HCT116 (cell line): ENCODE measurements at regions of chr10 and their contacts with region 1.

Region 1: GRCh38 chr10:7872041-7872442 is 53.7 kb downstream of the TAF3 start:
- DNase-seq: peak; percentile 0
- ATAC-seq: no peak
- H3K4me3 ChIP-seq: no peak overlapping the region; a peak in 1 of 4 replicates
- H3K27ac ChIP-seq: no peak overlapping the region
- H3K4me1 ChIP-seq: no peaks in the 10 kb centered on the region
- H3K27me3 ChIP-seq: no peaks in the 10 kb centered on the region
- CTCF ChIP-seq: peak; percentile 51 to 80 (median 57); a peak in 5 of 6 replicates
- POLR2A ChIP-seq: no peak
- RAD21 ChIP-seq: peak; percentile 70

Region 2: GRCh38 chr10:8306685-8307364 is 434.8 kb after region 1 on chr10:
- CTCF ChIA-PET with region 1: no interaction called
- POLR2A ChIA-PET with region 1: no interaction called
- RAD21 ChIA-PET with region 1: no interaction called
- intact Hi-C with region 1: loop called (anchors 10 kb)
- DNase-seq: no peak
- ATAC-seq: no peak
- H3K4me3 ChIP-seq: no peak overlapping the region
- H3K27ac ChIP-seq: no peak overlapping the region
- H3K4me1 ChIP-seq: no peaks in the 10 kb centered on the region
- H3K27me3 ChIP-seq: peaks cover 9% of the 10 kb centered on the region; the same call in 1 of the 2 replicates
- CTCF ChIP-seq: no peak
- POLR2A ChIP-seq: no peak
- RAD21 ChIP-seq: no peak

Region 3: GRCh38 chr10:9209105-9209798 is 1337.2 kb after region 1 on chr10:
- CTCF ChIA-PET with region 1: interaction called, 15 read pairs
- POLR2A ChIA-PET with region 1: no interaction called
- RAD21 ChIA-PET with region 1: no interaction called
- intact Hi-C with region 1: loop called (anchors 1 kb)
- DNase-seq: peak; percentile 33
- ATAC-seq: peak; percentile 47
- H3K4me3 ChIP-seq: no peak overlapping the region
- H3K27ac ChIP-seq: no peak overlapping the region
- H3K4me1 ChIP-seq: no peaks in the 10 kb centered on the region
- H3K27me3 ChIP-seq: no peaks in the 10 kb centered on the region
- CTCF ChIP-seq: peak; percentile 32 to 80 (median 75); a peak in 5 of 6 replicates
- POLR2A ChIP-seq: no peak
- RAD21 ChIP-seq: peak; percentile 61

Region 4: GRCh38 chr10:9302120-9302746 is 1430.2 kb after region 1 on chr10:
- CTCF ChIA-PET with region 1: interaction called, 4 read pairs
- POLR2A ChIA-PET with region 1: no interaction called
- RAD21 ChIA-PET with region 1: no interaction called
- intact Hi-C with region 1: loop called (anchors 1 kb)
- DNase-seq: peak; percentile 23
- ATAC-seq: 0 out of 2 replicates have a peak, but pooled peaks have one; percentile 40
- H3K4me3 ChIP-seq: no peak overlapping the region
- H3K27ac ChIP-seq: no peak overlapping the region
- H3K4me1 ChIP-seq: no peaks in the 10 kb centered on the region
- H3K27me3 ChIP-seq: no peaks in the 10 kb centered on the region
- CTCF ChIP-seq: peak in 2 of 3 experiments; percentile 26 to 48; a peak in 3 of 6 replicates
- POLR2A ChIP-seq: no peak
- RAD21 ChIP-seq: peak; percentile 52